Left cardiac atrium (tissue), 4 donors: ENCODE measurements at regions of chrX and their contacts with region 1.

Region 1: DNA sequence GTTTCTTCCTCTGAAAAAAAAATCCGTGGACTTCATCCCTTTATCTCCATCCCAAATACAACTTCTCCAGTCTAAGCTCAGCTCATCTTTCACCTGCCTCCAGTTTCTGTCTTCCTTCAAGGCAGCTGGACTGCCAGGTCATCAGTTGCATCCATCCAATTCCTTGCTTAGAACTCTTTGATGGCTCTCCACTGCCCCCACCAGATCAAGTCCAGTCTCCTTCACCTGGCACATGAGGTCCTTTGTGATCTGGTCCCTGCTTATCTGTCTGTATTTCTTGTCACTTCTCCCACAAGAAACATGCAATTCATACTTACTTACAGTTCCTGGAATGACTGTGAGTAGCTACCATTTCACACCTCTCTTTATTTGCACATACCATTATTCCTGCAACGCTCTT is 33.8 kb downstream of the OTUD6A start:
- DNase-seq: no peak
- ATAC-seq: no peak

Region 2: DNA sequence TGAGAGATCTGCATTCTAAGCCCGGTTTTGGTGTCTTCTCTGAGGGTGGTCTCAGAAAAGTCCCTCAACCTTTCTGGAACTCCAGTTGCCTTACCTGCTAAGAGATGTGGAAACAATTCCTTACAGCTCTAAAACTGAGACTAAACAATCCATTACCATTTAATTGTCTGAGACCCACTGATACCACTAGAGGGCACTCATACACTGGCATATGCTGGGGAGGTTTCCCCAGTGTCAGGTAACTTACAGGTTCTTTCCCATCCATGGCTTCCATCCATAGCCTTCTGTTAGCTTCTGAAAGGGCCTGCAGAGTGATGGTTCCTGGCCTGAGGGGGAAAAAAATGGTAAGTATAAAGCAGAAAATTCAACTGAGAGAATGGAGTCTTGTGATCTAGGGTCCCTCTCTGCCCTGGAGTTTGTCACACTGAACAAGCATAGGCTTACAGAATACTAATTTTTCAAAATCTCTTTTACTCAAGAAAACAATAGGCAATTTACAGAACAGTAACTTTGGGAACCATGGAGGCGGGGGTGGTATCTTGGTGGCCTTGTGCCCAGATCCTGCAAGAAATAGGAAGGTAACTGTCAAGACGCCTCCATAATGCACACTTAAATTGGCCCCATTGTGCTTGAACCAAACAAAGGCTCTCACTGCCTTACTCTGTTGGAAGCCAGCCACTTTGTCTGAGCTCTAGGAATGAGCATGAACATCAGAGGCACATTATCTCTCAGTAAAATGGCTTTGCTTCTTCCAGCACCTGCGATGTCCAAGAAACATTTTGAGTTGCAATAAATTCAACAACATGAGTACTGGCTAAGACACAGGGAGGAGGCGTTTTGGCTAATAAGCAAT is 1898.9 kb before region 1 on chrX:
- intact Hi-C with region 1: loop called in 1 of 2 experiments (anchors 5 kb)
- DNase-seq: no peak
- ATAC-seq: peak in 1 of 2 donors; percentile 49

Region 3: DNA sequence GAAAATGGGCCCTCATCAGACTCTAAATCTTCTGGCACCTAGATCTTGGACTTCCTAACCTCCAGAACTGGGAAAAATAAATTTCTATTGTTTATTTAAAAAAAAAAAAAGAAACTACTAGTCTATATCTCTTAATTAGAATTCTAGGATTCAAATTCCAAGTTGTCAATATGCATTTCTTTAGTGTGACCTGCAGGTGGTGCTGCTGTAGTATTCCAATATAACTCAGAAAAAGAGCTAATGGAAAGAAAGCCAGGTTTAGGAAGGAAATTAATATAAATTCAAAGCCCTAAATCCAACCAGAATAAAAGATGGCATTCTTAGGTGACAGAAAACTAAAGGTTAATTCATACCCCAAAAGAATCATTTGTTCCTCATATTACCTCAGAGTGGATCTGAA is 671.9 kb before region 1 on chrX:
- intact Hi-C with region 1: loop called in 1 of 2 experiments (anchors 10 kb)
- DNase-seq: no peak
- ATAC-seq: no peak

Region 4: DNA sequence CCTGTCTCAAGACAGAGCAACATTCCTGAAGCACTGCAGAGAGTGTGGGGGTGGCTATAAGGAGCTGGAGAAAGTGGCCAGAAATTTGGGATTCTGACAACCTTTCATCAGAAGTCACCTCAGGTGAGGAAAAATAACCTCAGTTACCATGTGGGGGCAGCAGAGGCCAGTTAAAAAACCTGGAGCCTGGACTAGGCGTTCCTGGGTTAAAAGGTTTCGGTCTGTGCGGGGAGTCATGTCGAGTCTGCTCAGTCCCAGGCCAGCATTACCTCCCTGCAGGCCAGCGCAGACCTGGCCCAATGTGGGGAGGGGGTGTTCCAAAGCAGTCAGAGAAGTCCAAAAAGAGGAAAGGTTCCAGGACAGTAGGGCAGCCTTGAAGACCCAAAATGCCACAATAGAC is 602.9 kb before region 1 on chrX:
- intact Hi-C with region 1: loop called in 1 of 2 experiments (anchors 2 kb)
- DNase-seq: no peak
- ATAC-seq: peak; percentile 48 to 71

Region 5: GRCh38 chrX:69538321-69538876 is 557.7 kb before region 1 on chrX:
- intact Hi-C with region 1: loop called in 1 of 2 experiments (anchors 5 kb)
- DNase-seq: peak; percentile 78
- ATAC-seq: peak; percentile 93 to 98

Region 6: DNA sequence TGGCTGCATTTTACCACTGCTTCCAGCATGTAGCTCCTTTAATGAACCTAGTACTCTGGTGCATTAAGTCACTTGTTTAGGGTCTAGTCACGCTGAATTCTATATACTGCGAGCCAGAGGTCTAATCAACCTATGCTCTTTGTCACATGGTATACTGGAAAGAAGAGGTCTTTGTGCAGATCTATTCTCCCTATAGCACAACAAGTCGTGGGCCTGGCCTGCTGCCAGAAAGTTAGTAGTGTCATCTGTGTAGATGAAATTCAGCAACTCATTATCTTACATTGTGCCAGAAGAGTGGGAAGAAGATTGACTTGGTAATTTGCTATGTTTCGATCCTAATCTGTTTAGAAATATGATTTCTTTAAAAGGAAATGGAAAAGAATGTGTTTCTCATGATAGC is 127.1 kb before region 1 on chrX:
- intact Hi-C with region 1: no loop called
- DNase-seq: peak; percentile 24
- ATAC-seq: no peak

Region 7: DNA sequence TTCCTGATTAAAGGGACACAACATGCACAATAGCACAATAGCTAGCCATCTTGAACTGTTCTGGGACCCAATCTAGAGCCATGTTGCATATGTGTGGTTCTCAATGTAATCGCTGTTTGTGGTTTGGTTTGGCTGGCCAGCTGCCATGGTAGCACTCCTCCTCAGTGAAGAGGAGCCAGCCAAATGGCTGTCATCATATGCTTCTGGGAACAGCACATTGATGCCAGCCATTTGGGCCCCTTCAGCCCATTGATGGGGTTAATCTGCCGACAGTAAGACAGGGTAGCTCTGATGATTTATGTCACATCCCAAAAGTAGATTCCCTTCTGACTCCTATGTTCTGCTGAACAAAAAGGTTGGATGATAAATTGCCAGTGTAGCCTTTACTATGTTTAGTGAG is 94.8 kb before region 1 on chrX:
- intact Hi-C with region 1: no loop called
- DNase-seq: peak; percentile 47
- ATAC-seq: peak; percentile 80 to 88

Region 8: DNA sequence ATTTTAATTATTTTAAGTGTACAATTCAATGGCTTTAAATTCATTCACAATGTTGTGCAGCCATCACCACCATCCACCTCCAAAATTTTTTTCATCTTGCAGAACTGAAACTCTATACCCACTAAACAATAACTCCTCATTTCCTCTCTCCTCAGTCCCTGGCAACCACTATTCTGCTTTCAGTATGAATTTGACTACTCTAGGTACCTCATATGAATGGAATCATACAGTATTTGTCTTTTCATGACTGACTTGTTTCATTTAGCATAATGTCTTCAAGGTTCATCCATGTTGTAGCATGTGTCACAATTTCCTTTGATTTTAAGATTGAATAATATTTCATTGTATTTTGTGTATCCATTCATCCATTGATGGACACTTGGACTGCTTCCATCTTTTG is 240.7 kb after region 1 on chrX:
- intact Hi-C with region 1: no loop called
- DNase-seq: no peak
- ATAC-seq: no peak

Region 9: GRCh38 chrX:70554081-70554480 is 458.0 kb after region 1 on chrX:
- intact Hi-C with region 1: no loop called
- DNase-seq: no peak
- ATAC-seq: no peak